ENCODE measurements at regions of chr10 and their contacts with region 1.

Region 1: DNA sequence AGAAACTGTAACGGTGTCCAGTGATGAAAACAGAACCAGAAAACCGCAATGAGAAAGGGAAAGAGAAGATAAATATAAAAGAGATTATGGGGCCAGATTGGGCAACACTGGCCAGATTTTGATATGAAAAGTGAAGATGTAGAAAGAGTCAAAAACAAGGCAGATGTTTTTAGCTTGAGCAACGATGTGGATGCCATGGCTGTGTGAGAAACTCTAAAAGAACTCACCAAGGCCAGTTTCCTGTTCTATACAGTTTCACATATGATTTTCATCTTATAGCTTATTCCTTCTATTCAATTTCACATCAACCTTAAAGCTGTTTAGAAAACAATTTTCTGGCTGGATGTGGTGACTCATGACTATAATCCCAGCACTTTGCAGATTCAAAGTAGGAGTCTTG is 36.3 kb downstream of the CSTF2T start:
- DNase-seq: no peak
- ATAC-seq: no peak
- H3K4me3 ChIP-seq: no peak overlapping the region
- H3K27ac ChIP-seq: no peak overlapping the region
- H3K4me1 ChIP-seq: no peaks in the 10 kb centered on the region
- H3K27me3 ChIP-seq: no peaks in the 10 kb centered on the region
- CTCF ChIP-seq: no peak

Region 2: GRCh38 chr10:50988792-50989191 is 674.3 kb before region 1 on chr10:
- CTCF ChIA-PET with region 1: no interaction called
- POLR2A ChIA-PET with region 1: no interaction called
- in situ Hi-C with region 1: no loop called
- intact Hi-C with region 1: no loop called
- DNase-seq: no peak
- ATAC-seq: no peak
- H3K4me3 ChIP-seq: no peak overlapping the region
- H3K27ac ChIP-seq: no peak overlapping the region
- H3K4me1 ChIP-seq: peaks cover 6% of the 10 kb centered on the region
- H3K27me3 ChIP-seq: peaks cover 46% of the 10 kb centered on the region
- CTCF ChIP-seq: peak; percentile 78

Region 3: DNA sequence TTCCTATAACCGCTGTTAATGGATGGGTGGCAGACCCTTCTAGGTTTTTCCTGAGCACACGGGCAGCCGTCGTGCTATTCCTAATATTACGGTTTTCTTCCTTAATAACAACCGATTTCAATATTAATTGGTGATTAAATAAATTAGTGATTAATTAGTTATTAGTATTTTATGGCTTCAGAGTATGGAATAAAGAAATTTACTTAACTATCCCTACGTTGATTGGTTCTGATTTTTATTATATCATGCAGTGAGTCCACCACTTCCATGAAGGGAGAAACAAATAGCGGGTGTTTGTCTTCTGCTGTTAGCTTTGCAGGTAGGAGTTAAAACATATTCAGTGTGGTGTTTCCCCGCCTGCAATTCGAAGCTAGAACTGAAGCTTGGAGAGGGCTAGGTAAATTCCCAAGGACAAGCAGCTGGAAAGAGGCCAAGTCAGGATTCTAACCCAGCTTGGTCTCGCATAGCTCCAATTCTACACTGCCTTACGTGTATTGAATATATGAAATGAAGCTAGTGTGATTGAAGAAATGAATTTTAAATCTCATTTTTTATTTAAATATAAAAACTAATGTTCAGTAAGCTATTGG is 37.2 kb after region 1 on chr10:
- CTCF ChIA-PET with region 1: interaction called, 3 read pairs
- POLR2A ChIA-PET with region 1: interaction called, 15 read pairs
- in situ Hi-C with region 1: no loop called
- intact Hi-C with region 1: no loop called
- DNase-seq: no peak
- ATAC-seq: peak; percentile 39; the same call in 1 of the 2 replicates
- H3K4me3 ChIP-seq: peak overlapping the region; percentile 98 to 99
- H3K27ac ChIP-seq: peak overlapping the region; percentile 100
- H3K4me1 ChIP-seq: peaks cover 17% of the 10 kb centered on the region
- H3K27me3 ChIP-seq: no peaks in the 10 kb centered on the region
- CTCF ChIP-seq: no peak

Region 4: GRCh38 chr10:52265131-52265926 is 602.2 kb after region 1 on chr10:
- CTCF ChIA-PET with region 1: no interaction called
- POLR2A ChIA-PET with region 1: interaction called, 14 read pairs
- in situ Hi-C with region 1: no loop called
- intact Hi-C with region 1: no loop called
- DNase-seq: no peak
- ATAC-seq: no peak
- H3K4me3 ChIP-seq: no peak overlapping the region
- H3K27ac ChIP-seq: no peak overlapping the region
- H3K4me1 ChIP-seq: no peaks in the 10 kb centered on the region
- H3K27me3 ChIP-seq: no peaks in the 10 kb centered on the region
- CTCF ChIP-seq: no peak

Measured in Panc1 (cell line).